ENCODE measurements at regions of chr1 and their contacts with region 1.

Region 1: GRCh38 chr1:160726498-160727315 is 12.3 kb upstream of the SLAMF7 start:
- DNase-seq: peak; percentile 84 to 86
- H3K4me3 ChIP-seq: no peak overlapping the region
- H3K4me1 ChIP-seq: peaks cover 33% of the 10 kb centered on the region
- H3K27me3 ChIP-seq: no peaks in the 10 kb centered on the region

Region 2: GRCh38 chr1:160219062-160219929 is 507.4 kb before region 1 on chr1:
- in situ Hi-C with region 1: no loop called
- DNase-seq: peak in 1 of 2 experiments; percentile 37
- H3K4me3 ChIP-seq: no peak overlapping the region
- H3K4me1 ChIP-seq: no peaks in the 10 kb centered on the region
- H3K27me3 ChIP-seq: no peaks in the 10 kb centered on the region

Region 3: DNA sequence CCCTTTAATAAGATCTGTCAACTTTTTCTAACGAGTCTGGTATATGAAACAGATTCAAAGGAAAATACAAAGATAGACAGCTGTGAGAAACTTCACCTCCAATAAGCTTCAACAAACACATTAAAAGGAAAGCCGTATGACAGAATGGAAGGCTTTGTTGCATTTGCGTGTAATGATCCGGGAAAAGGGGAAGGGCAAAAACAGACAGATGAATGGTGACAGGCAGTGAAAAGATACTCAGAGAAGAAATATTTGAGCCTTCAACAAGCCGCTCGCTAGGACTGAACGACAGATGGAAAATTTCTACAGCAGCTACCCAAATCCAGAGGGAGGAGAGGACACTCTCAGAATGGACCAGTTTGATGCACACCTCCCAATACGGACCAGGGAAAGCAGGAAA is 398.5 kb before region 1 on chr1:
- in situ Hi-C with region 1: no loop called
- DNase-seq: no peak
- H3K4me3 ChIP-seq: no peak overlapping the region
- H3K4me1 ChIP-seq: no peaks in the 10 kb centered on the region
- H3K27me3 ChIP-seq: no peaks in the 10 kb centered on the region

Region 4: DNA sequence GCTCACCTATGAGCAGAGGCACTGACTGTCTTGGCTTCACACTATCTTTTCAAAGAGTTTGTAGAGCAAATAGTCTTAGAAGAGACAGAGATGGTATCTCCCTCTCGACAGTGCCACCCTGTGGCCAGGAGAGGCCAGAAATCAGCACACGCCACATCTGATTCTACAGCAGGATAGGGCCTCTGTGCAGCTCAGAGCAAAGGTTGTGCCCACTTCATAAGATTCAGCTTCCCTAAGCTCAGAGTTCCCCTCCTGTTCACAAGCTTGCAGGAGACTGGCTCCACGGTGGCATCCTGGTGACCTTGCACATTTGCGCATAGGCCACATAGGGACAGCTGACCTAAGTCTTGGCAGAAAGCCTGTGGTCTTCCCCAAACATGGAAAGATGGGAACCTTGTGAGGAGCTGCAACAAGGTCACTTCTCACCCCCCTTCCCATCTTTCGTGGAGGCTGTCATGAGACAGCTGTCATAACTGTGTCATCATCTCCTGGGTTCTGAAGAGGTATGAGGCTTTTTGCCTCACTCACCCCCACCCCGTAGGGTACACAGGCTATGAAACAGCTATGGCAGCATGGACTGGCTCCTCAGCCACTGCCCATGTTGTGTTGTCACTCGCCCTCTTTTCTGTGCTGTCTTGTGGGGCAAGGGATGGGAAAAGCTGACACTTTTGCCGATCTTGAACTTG is 224.9 kb after region 1 on chr1:
- in situ Hi-C with region 1: loop called (anchors 10 kb)
- DNase-seq: peak; percentile 65 to 79
- H3K4me3 ChIP-seq: no peak overlapping the region
- H3K4me1 ChIP-seq: peaks cover 8% of the 10 kb centered on the region
- H3K27me3 ChIP-seq: no peaks in the 10 kb centered on the region

Region 5: DNA sequence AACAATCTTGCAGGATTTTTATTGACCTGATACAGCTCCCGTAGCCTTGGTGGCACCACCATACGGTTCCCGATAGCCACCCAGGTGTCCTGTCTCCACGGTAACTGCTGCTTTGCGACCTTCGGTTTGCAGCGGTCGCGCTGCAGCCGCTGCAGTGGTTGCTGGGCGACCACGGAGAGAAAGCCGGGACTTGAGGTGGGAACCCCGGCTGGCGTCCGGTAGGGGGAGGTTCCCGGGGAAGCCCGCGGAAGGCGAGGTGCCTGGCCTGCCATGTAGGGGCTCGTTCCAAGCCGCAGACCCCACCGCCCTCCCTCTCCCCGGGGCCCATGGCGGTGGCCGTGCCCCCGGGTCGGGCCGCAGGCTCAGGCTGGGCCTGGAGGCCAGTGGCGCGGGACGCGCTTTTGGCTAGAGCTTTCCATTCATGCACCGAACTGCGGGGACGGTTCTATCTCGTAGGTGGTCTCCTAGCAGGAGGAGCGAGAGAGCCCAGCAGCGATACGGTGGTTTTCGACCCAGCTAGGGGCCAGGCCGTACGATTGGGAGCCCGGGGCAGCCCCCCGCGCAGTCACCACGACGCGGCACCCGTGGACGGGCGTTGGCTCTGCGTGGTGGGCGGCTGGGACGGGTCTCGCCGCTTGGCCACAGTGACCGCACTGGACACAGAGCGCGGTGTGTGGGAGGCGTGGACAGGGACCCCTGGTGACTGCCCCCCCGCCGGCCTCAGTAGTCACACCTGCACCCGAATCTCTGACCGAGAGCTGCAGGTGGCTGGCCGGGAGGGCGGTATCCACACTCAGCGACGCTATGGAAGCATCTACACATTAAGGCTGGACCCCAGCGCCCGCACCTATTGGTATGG is 371.7 kb after region 1 on chr1 and contains the start of gene KLHDC9:
- in situ Hi-C with region 1: loop called (anchors 10 kb)
- DNase-seq: no peak
- H3K4me3 ChIP-seq: no peak within 1 kb of the TSS
- H3K4me1 ChIP-seq: no peaks in the 10 kb centered on the region
- H3K27me3 ChIP-seq: no peaks in the 10 kb centered on the region

Measured in HAP-1 (cell line).